Transverse colon (tissue), 4 donors: ENCODE measurements at regions of chr10 and their contacts with region 1.

Region 1: GRCh38 chr10:119596537-119597404 is at the start of gene TIAL1:
- DNase-seq: peak; percentile 98
- H3K4me3 ChIP-seq: peak within 1 kb of the TSS; percentile 55 to 95 (median 80)
- H3K27ac ChIP-seq: peak within 1 kb of the TSS; percentile 97 to 100 (median 99)
- H3K4me1 ChIP-seq: peaks cover 18 to 48% (median 44%) of the 10 kb centered on the region in 4 donors
- H3K27me3 ChIP-seq: no peaks in the 10 kb centered on the region
- CTCF ChIP-seq: no peak
- EP300 ChIP-seq: no peak
- POLR2A ChIP-seq: peak; percentile 91
- total RNA-seq, gene TIAL1: 35.2 to 117 (median 66.7) TPM

Region 2: DNA sequence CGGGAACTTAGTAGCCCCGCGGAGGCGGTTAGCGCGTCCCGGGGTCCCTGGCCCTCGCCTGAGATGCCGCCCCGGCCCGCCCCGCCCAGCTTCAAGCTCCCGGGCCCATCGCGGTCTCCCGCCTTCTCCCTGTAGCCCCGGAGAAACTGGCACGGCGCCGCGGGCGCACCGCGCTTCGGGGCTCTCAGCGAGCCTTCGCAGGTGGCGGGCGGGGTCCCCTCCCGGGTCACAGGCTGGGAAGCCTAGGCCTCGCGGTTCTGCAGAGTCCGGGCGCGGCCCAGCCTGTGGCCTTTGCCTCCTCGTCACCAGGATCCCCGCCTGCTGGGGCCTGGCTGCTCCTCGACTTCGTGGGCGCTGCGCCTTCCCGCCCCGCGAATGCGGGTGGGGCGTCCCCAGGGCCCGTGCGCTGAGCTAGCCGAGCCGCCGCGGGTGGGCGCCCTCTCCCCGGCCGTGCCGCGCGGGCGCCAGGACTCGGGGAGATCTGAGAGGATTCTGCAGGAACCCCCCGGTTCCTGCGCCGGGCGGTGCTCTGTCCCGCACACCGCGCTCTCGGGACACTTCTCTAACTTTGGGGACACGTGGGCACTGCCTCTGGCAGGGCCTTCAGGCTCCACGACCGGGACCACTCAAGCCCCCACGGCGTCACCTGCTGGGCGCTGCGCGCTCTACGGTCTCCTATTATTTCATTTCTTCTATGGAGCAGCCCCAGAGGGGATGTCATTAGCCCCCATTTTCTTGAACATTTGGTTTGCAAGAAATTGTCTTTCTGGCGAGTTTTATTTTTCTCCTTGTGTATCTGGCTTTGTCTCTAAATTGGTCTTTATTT is 53.6 kb before region 1 on chr10:
- in situ Hi-C with region 1: no loop called
- intact Hi-C with region 1: loop called (anchors 10 kb)
- DNase-seq: peak; percentile 66
- H3K4me3 ChIP-seq: peak overlapping the region; percentile 57 to 84 (median 65)
- H3K27ac ChIP-seq: peak overlapping the region; percentile 86 to 95 (median 91)
- H3K4me1 ChIP-seq: peaks cover 17 to 45% (median 30%) of the 10 kb centered on the region in 4 donors
- H3K27me3 ChIP-seq: peaks cover 4% of the 10 kb centered on the region
- CTCF ChIP-seq: peak; percentile 32 to 49 (median 46)
- EP300 ChIP-seq: no peak
- POLR2A ChIP-seq: peak; percentile 4